Mammary epithelial cell (primary cell): ENCODE measurements at regions of chr18 and their contacts with region 1.

Region 1: DNA sequence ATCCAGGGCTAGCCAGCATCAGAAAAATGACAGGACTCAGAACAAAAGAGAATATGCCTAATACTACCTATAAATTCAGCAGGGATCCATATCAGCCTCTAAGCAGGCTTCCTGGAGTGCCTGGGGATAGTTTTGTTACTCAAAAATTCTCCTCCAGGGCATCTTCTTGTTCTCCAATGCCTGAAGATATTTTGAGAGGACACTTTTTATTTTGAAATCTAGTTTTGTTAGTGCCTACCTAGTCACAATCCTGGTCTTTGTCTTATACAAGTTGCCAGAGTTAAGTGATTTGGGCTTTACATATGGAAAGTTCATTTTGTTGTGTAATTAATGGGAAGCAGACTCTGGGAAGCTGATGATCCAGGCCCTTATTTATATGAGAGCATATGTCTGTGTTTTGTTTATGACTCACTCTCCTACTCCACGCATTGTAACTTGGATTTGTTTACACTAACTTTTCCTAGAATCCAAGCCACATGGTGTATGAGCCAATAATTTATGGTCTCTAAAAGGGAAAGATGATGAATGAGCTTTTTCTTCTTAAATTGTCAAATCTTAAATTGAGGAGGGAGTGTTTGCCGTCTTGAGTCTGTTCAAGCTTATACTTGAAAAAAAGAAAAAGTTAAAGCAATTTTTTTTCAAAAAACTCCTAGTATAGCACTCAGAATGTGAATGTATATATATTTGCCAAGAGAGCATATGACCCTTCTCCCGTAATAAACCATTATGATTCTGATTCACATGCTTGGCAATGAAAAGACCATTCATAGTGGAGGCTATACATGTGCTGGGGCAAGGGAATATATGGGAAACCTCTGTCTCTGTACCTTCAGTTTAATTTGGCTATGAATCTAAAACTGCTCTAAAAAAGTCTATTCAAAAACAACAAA is 370.3 kb downstream of the SETBP1 start:
- DNase-seq: peak; percentile 68
- H3K4me3 ChIP-seq: no peak overlapping the region
- H3K27ac ChIP-seq: no peak overlapping the region
- H3K4me1 ChIP-seq: peaks cover 8% of the 10 kb centered on the region
- H3K27me3 ChIP-seq: no peaks in the 10 kb centered on the region
- CTCF ChIP-seq: no peak

Region 2: GRCh38 chr18:44258576-44258975 is 792.4 kb before region 1 on chr18:
- CTCF ChIA-PET with region 1: no interaction called
- dilution Hi-C with region 1: no loop called
- in situ Hi-C with region 1: no loop called
- intact Hi-C with region 1: no loop called
- DNase-seq: no peak
- H3K4me3 ChIP-seq: no peak overlapping the region
- H3K27ac ChIP-seq: no peak overlapping the region
- H3K4me1 ChIP-seq: no peaks in the 10 kb centered on the region
- H3K27me3 ChIP-seq: no peaks in the 10 kb centered on the region
- CTCF ChIP-seq: no peak

Region 3: GRCh38 chr18:45085916-45086624 is 35.1 kb after region 1 on chr18:
- CTCF ChIA-PET with region 1: no interaction called
- dilution Hi-C with region 1: no loop called
- in situ Hi-C with region 1: no loop called
- intact Hi-C with region 1: loop called (anchors 5 kb)
- DNase-seq: peak; percentile 26
- H3K4me3 ChIP-seq: no peak overlapping the region
- H3K27ac ChIP-seq: no peak overlapping the region
- H3K4me1 ChIP-seq: peaks cover 12% of the 10 kb centered on the region
- H3K27me3 ChIP-seq: no peaks in the 10 kb centered on the region
- CTCF ChIP-seq: no peak